Esophagus muscularis mucosa (tissue), 4 donors: ENCODE measurements at regions of chr9 and their contacts with region 1.

Region 1: GRCh38 chr9:129078691-129079503 is 2.0 kb upstream of the DOLPP1 start:
- DNase-seq: no peak
- H3K4me3 ChIP-seq: no peak overlapping the region
- H3K27ac ChIP-seq: no peak overlapping the region
- H3K4me1 ChIP-seq: peaks cover 11 to 34% (median 23%) of the 10 kb centered on the region in 4 donors
- H3K27me3 ChIP-seq: no peaks in the 10 kb centered on the region
- CTCF ChIP-seq: no peak
- EP300 ChIP-seq: no peak
- POLR2A ChIP-seq: no peak

Region 2: GRCh38 chr9:129036241-129036922 is 42.5 kb before region 1 on chr9 and contains the start of gene MIGA2:
- intact Hi-C with region 1: loop called (anchors 5 kb)
- DNase-seq: peak; percentile 99
- H3K4me3 ChIP-seq: peak within 1 kb of the TSS; percentile 79 to 99 (median 88)
- H3K27ac ChIP-seq: peak within 1 kb of the TSS; percentile 82 to 91 (median 88)
- H3K4me1 ChIP-seq: peaks cover 22 to 48% (median 33%) of the 10 kb centered on the region in 4 donors
- H3K27me3 ChIP-seq: no peaks in the 10 kb centered on the region
- CTCF ChIP-seq: peak in 1 of 3 experiments; percentile 37
- EP300 ChIP-seq: no peak
- POLR2A ChIP-seq: peak; percentile 75
- total RNA-seq, gene MIGA2: 23.9 to 44.2 (median 32.1) TPM

Region 3: GRCh38 chr9:129422843-129423192 is 343.9 kb after region 1 on chr9:
- intact Hi-C with region 1: no loop called
- DNase-seq: no peak
- H3K4me3 ChIP-seq: no peak overlapping the region
- H3K27ac ChIP-seq: peak overlapping the region in 1 of 4 donors; percentile 3
- H3K4me1 ChIP-seq: peaks cover 5 to 24% (median 16%) of the 10 kb centered on the region in 4 donors
- H3K27me3 ChIP-seq: no peaks in the 10 kb centered on the region
- CTCF ChIP-seq: no peak
- EP300 ChIP-seq: no peak
- POLR2A ChIP-seq: no peak